Ascending aorta (tissue), 2 donors: ENCODE measurements at regions of chr1 and their contacts with region 1.

Region 1: GRCh38 chr1:28518000-28518744 is 12.3 kb downstream of the RCC1 start:
- DNase-seq: peak; percentile 50 to 93
- H3K4me3 ChIP-seq: peak overlapping the region; percentile 69 to 97
- H3K27ac ChIP-seq: peak overlapping the region; percentile 43 to 87
- H3K4me1 ChIP-seq: peaks cover 9 to 13% of the 10 kb centered on the region in 2 donors
- H3K27me3 ChIP-seq: no peaks in the 10 kb centered on the region
- CTCF ChIP-seq: peak; percentile 97 to 100 (median 99)

Region 2: DNA sequence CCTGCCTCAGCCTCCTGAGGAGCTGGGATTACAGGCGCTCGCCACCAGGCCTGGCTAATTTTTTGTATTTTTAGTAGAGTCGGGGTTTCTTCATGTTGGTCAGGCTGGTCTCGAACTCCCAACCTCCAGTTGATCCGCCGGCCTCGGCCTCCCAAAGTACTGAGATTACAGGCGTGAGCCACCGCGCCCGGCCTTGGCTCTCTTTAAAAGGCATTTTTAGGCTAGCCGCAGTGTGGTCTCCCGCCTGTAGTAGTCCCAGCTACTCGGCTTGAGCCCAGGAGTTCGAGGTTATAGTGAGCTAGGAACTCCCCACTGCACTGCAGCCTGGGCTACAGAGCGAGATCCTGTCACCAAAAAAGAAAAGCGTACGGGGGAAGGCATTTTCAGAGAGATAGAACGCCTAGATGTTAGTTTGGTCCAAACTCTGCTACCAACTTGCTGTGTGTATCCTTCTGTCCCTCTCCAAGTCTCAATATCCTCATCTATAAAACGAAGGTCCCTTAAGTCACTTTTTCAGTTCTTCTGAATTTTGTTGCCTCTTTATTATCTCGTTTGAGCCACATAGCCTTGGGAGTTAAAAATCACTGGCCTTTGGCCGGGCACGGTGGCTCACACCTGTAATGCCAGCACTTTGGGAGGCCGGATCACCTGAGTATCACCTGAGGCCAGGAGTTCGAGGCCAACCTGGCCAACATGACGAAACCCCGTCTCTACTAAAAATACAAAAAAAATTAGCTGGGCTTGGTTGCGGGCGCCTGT is 188.6 kb before region 1 on chr1:
- intact Hi-C with region 1: no loop called
- DNase-seq: peak in 1 of 2 donors; percentile 67
- H3K4me3 ChIP-seq: peak overlapping the region; percentile 63 to 71
- H3K27ac ChIP-seq: peak overlapping the region; percentile 75 to 82
- H3K4me1 ChIP-seq: peaks cover 2 to 10% of the 10 kb centered on the region in 2 donors
- H3K27me3 ChIP-seq: no peaks in the 10 kb centered on the region
- CTCF ChIP-seq: peak in 1 of 3 experiments; percentile 11

Region 3: DNA sequence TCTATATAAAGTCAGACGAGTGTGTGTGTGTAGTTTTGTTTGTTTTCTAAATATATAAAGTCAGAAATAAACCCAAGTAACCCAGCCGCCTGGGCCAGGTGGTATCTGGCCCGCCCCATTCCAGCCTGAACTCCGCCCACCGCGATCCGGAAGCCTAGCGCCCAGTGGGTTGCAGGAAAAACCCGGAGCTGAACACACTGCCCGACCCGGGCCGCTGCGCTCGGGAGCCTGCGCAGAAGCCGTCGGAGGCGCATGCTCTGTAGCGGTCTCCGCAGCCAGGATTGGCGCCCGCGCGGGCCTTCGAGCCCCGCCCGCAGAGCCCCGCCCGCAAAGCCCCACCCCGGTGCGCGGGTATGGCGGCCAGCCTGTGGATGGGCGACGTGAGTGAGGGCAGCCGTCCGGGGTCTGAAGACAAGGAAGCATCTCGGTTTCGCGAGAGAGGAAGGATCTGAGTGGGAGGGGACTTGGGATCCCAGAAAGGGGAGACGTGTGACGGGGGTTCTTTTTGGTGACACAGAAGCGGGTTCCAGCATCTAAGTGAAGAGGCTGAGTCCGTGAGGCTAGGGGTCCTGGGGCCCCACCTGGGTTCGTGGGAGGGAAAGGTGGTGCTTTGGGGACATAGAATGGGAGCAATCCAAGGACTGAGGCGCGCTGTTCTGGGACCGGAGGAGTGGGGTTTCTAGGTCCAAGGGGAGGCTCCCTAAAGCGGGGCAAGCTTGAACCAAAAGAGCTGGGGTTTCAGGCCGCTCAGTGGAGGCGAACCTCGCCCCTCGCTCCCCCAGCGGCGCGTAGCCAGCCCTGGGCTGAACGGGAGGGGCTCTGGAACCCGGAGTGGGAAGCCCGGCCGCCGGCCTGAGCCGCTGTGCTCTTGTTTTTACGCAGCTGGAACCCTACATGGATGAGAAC is 34.8 kb after region 1 on chr1 and contains the start of gene TRNAU1AP:
- intact Hi-C with region 1: loop called (anchors 2 kb)
- DNase-seq: peak; percentile 83 to 97
- H3K4me3 ChIP-seq: peak within 1 kb of the TSS; percentile 64 to 90
- H3K27ac ChIP-seq: peak within 1 kb of the TSS; percentile 77 to 85
- H3K4me1 ChIP-seq: peaks cover 0 to 10% of the 10 kb centered on the region in 2 donors
- H3K27me3 ChIP-seq: no peaks in the 10 kb centered on the region
- CTCF ChIP-seq: no peak
- total RNA-seq, gene TRNAU1AP: 11.0 TPM

Region 4: GRCh38 chr1:28581536-28582247 is 63.5 kb after region 1 on chr1:
- intact Hi-C with region 1: loop called (anchors 2 kb)
- DNase-seq: peak; percentile 85 to 97
- H3K4me3 ChIP-seq: peak overlapping the region; percentile 77 to 86
- H3K27ac ChIP-seq: peak overlapping the region; percentile 91 to 92
- H3K4me1 ChIP-seq: peaks cover 8 to 14% of the 10 kb centered on the region in 2 donors
- H3K27me3 ChIP-seq: no peaks in the 10 kb centered on the region
- CTCF ChIP-seq: peak in 1 of 3 experiments; percentile 35

Region 5: GRCh38 chr1:28602536-28603439 is 84.6 kb after region 1 on chr1:
- intact Hi-C with region 1: loop called (anchors 1 kb)
- DNase-seq: peak in 1 of 2 donors; percentile 78
- H3K4me3 ChIP-seq: no peak overlapping the region
- H3K27ac ChIP-seq: peak overlapping the region; percentile 53 to 65
- H3K4me1 ChIP-seq: peaks cover 6 to 8% of the 10 kb centered on the region in 2 donors
- H3K27me3 ChIP-seq: no peaks in the 10 kb centered on the region
- CTCF ChIP-seq: peak; percentile 52 to 68 (median 56)

Region 6: GRCh38 chr1:28736450-28737306 is 218.5 kb after region 1 on chr1 and contains the start of gene YTHDF2:
- intact Hi-C with region 1: loop called (anchors 5 kb)
- DNase-seq: peak; percentile 86 to 99
- H3K4me3 ChIP-seq: peak within 1 kb of the TSS; percentile 96 to 97
- H3K27ac ChIP-seq: peak within 1 kb of the TSS; percentile 93 to 94
- H3K4me1 ChIP-seq: peaks cover 5 to 19% of the 10 kb centered on the region in 2 donors
- H3K27me3 ChIP-seq: no peaks in the 10 kb centered on the region
- CTCF ChIP-seq: peak; percentile 93 to 95 (median 95)
- total RNA-seq, gene YTHDF2: 50.6 TPM

Region 7: GRCh38 chr1:28761189-28761588 is 243.0 kb after region 1 on chr1:
- intact Hi-C with region 1: no loop called
- DNase-seq: no peak
- H3K4me3 ChIP-seq: no peak overlapping the region
- H3K27ac ChIP-seq: no peak overlapping the region
- H3K4me1 ChIP-seq: peaks cover 0 to 3% of the 10 kb centered on the region in 2 donors
- H3K27me3 ChIP-seq: no peaks in the 10 kb centered on the region
- CTCF ChIP-seq: no peak

Region 8: DNA sequence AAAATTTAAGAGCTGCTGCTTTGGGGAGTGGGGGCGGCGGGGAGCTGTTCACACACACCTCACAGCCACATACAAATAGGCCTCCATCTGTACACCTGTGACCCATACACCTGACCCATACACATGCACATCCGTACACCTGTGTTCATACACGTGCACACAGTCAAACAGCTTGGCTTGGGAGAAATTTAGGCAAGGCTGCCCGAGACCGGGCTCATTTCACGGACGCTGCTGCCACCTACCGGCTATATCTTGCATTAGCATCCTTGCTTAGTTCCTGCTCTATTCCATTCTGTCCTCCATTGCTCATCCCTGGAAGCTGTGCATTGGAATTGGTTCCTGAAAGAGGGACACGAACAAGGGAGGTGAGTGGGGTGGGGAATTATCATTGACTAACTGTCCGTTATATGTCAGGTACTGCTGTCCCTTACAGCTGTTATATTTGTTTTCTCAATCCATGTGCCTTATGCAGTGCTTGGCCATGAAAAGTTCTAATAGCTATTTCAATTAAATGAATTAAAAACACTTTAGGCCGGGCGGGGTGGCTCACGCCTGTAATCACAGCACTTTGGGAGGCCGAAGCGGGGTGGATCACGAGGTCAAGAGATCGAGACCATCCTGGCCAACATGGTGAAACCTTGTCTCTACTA is 359.1 kb after region 1 on chr1:
- intact Hi-C with region 1: loop called (anchors 1 kb)
- DNase-seq: peak in 1 of 2 donors; percentile 83
- H3K4me3 ChIP-seq: no peak overlapping the region
- H3K27ac ChIP-seq: no peak overlapping the region
- H3K4me1 ChIP-seq: peaks cover 0 to under 1% of the 10 kb centered on the region in 2 donors
- H3K27me3 ChIP-seq: no peaks in the 10 kb centered on the region
- CTCF ChIP-seq: peak; percentile 78 to 89 (median 88)